ENCODE measurements at regions of chr14 and their contacts with region 1.

Region 1: DNA sequence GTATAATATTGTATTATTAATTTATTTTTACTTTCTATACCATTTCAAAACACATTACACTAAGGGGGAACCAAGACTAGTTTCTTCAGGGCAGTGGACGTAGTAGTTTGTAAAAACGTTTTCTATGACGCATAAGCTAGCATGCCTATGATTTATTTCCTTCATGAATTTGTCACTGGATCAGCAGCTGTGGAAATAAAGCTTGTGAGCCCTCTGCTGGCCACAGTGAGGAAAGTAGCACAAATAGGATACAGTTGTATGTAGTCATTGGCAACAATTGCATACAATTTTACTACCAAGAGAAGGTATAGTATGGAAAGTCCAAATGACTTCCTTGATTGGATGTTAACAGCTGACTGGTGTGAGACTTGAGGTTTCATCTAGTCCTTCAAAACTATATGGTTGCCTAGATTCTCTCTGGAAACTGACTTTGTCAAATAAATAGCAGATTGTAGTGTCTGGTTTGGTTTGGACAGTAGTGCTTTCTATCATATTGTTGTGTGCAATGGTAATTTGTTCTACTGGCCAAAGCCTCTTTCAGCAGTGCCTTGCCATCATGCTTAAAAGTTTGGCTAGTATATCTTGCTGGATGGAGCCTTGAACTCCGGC is 24.3 kb upstream of the PLEKHD1 start:
- DNase-seq: peak; percentile 76
- H3K4me3 ChIP-seq: no peak overlapping the region
- H3K27ac ChIP-seq: no peak overlapping the region
- H3K4me1 ChIP-seq: no peaks in the 10 kb centered on the region
- H3K27me3 ChIP-seq: no peaks in the 10 kb centered on the region
- CTCF ChIP-seq: peak; percentile 78 to 86

Region 2: GRCh38 chr14:68862954-68863594 is 597.1 kb before region 1 on chr14:
- CTCF ChIA-PET with region 1: no interaction called
- dilution Hi-C with region 1: no loop called
- in situ Hi-C with region 1: no loop called
- intact Hi-C with region 1: loop called (anchors 5 kb)
- DNase-seq: peak; percentile 59
- H3K4me3 ChIP-seq: no peak overlapping the region
- H3K27ac ChIP-seq: no peak overlapping the region
- H3K4me1 ChIP-seq: no peaks in the 10 kb centered on the region
- H3K27me3 ChIP-seq: no peaks in the 10 kb centered on the region
- CTCF ChIP-seq: peak; percentile 75 to 84

Region 3: DNA sequence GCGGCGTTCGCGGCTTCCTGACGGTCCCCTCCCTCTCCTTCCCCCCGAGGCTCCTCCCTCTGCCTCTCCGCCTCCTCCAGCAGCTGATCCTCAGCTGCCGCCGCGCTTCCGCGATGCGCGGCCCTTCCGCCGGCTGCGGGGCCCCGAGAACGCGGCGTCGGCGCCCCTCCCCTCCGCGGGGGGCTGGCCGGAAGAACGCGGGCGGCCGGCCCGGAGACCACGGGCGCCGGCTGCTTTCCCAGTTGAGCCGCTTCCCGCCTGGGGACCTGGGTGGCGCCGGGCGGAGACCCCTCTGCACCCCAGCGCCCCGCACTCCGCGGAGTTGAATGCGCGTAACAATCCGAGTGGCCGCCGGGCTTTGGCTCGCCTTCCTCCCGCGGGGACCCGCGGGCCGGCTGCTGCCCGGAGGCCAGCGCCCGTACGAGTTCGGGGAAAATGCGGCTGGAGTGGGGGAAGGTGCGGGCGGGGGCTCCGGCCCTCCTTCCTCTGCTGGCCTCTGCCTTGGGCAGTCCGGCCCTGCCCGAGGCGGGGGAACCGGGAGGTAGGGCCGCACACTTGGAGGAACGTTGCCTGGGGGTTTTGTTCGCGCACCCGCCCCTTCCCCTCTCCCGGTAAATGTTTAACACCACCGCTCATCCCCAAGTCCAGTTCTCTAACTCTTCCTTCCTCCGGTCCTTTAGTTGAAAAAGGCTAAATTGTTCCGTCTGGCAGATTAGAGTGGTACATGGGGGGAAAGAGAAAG is 306.9 kb before region 1 on chr14:
- CTCF ChIA-PET with region 1: no interaction called
- dilution Hi-C with region 1: no loop called
- in situ Hi-C with region 1: no loop called
- intact Hi-C with region 1: loop called (anchors 5 kb)
- DNase-seq: peak; percentile 92
- H3K4me3 ChIP-seq: peak overlapping the region; percentile 59 to 92 (median 83)
- H3K27ac ChIP-seq: peak overlapping the region; percentile 47
- H3K4me1 ChIP-seq: peaks cover 30% of the 10 kb centered on the region
- H3K27me3 ChIP-seq: no peaks in the 10 kb centered on the region
- CTCF ChIP-seq: no peak

Region 4: GRCh38 chr14:69247676-69248440 is 212.3 kb before region 1 on chr14:
- CTCF ChIA-PET with region 1: interaction called, 7 read pairs
- dilution Hi-C with region 1: loop called (anchors 5 kb)
- in situ Hi-C with region 1: loop called (anchors 10 kb)
- intact Hi-C with region 1: no loop called
- DNase-seq: no peak
- H3K4me3 ChIP-seq: no peak overlapping the region
- H3K27ac ChIP-seq: no peak overlapping the region
- H3K4me1 ChIP-seq: no peaks in the 10 kb centered on the region
- H3K27me3 ChIP-seq: no peaks in the 10 kb centered on the region
- CTCF ChIP-seq: peak; percentile 19 to 23

Region 5: DNA sequence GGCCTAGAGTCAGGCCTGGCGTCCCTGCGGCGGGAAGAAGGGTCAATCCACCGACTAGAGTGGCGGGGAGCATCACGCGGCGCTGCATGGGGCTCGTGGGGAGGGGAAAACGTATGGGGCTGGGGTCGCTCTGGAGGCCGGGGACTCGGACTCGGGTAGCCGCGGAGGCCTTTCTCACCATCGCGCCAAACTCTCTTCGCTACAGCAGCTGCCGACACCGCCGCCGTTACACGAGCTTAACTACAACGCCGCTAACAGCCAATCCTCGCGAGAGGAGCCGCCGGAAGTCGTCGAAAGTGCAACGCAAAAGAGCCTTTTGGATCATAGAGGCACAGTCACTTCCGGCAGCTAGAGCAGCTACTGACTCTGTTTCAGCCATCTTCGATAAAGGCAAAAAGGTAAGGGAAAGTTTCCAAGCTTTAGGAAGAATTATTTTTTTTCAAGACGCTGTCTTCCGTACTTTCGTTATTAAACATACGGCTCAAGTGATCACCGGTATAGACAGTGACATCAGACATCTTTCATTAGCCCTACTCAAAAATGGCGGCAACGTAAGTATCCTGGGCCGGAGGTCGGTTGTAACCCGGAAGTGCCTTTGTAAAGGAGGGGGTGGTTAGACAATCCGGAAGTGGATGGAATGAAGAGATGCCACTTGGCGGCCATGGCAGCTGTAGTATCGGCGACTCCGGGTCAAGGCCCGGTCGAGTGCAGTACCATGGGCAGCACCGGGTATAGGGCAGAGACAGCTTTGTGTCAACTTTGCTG is 62.0 kb before region 1 on chr14 and contains the starts of genes ERH and SLC39A9:
- CTCF ChIA-PET with region 1: no interaction called
- dilution Hi-C with region 1: no loop called
- in situ Hi-C with region 1: no loop called
- intact Hi-C with region 1: loop called (anchors 2 kb)
- DNase-seq: peak; percentile 96
- H3K4me3 ChIP-seq: peak within 1 kb of the TSS; percentile 56 to 95 (median 75)
- H3K27ac ChIP-seq: peak within 1 kb of the TSS; percentile 92
- H3K4me1 ChIP-seq: peaks cover 21% of the 10 kb centered on the region
- H3K27me3 ChIP-seq: no peaks in the 10 kb centered on the region
- CTCF ChIP-seq: no peak
- total RNA-seq, gene ERH: 53.8 to 190 TPM
- total RNA-seq, gene SLC39A9: 61.5 to 157 TPM